ENCODE measurements at regions of chr16 and their contacts with region 1.

Region 1: DNA sequence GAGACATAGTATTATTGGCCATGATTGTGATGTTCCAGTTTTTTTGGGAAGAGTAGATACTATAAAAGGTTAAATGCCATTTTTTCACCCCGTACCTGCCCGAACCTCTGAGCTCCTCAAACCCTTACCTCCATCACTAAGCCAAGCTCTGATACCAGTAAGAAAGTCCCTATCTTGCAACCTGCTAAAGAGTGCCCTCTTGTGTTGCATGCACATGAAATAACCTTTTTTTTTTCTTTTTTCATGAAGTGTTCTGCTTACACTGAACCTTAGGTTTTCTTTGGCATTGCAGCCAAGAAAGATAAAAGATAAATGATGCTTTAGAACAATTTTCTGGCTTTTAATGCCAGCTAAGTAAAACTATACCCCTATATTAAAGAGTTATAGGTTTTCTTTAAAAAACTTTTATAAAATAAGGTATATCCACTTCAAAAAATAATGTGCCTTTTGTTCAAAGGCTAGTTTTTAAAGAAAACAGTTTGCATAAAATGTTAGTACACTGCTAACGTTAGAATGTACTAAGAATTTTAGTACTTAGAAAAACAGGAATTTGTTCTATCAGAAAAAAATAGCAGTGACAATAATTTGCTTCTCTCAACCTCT is 295.3 kb upstream of the PMFBP1 start:
- DNase-seq: peak; percentile 6
- H3K4me3 ChIP-seq: no peak overlapping the region
- H3K27ac ChIP-seq: no peak overlapping the region
- H3K27me3 ChIP-seq: no peaks in the 10 kb centered on the region
- CTCF ChIP-seq: peak; percentile 86

Region 2: DNA sequence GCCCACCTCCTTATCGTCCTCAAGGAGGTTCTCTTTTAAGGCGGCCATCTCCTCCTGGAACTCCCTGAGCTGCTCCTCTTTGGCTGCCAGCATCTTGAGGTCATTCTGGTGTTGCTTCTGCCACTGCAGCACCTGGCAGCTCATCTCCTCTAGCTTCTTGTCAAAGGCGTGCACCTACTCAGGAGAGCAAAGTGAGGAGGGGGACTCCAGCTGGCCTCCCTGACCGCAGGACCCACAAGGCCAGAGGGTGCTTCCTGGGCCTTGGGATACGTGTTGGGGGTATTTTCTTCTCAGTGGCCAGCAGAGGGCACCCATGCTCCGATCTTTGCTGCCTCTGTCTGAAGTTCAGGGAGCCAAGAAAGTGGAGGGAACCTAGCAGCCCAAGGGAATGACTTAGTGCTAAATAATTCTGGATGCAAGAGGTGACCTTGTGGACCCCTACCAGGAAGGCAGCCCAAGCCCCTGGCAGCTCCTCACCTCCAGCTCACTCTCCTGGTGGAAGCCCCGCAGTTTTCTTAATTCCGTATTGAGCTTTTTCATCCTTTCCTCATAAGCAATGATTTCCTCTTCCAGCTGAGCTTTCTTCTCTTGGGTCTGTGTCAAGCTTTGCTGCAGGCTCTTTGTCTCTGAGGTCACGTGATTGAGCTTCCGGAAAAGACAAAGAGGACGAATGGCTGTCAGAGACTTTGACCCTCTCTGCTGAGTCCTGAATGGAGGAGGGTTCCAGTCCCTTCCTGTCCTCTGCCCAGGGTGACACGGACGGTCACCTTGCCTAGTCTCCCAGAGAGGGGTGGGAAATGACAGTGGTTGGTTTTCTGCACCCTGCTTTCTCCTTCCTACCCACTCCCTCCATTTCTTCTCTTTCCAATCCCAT is 342.3 kb before region 1 on chr16:
- CTCF ChIA-PET with region 1: interaction called, 24 read pairs
- POLR2A ChIA-PET with region 1: no interaction called
- DNase-seq: peak; percentile 34
- H3K4me3 ChIP-seq: no peak overlapping the region
- H3K27ac ChIP-seq: no peak overlapping the region
- H3K27me3 ChIP-seq: peaks cover 8% of the 10 kb centered on the region
- CTCF ChIP-seq: peak; percentile 86

Region 3: DNA sequence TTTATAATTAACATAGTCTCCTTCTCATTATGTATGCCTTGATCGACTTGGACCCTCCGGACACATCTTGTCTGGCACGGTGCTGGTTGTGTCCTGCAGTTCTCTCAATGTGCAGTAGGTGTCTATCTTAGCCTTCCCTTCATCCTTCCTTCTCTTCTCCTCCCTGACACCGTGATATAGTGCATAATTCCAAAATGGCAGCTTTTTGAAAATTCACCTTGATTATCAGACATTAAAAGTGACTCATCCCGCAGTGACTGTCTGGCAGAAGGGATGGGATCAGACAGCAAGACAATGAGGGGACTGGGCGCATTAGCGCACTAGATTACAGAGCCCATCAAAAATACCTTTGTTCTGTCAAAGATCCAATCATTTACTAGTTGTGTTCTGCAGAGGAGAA is 225.3 kb before region 1 on chr16:
- CTCF ChIA-PET with region 1: interaction called, 157 read pairs
- POLR2A ChIA-PET with region 1: no interaction called
- DNase-seq: peak; percentile 23
- H3K4me3 ChIP-seq: no peak overlapping the region
- H3K27ac ChIP-seq: no peak overlapping the region
- H3K27me3 ChIP-seq: no peaks in the 10 kb centered on the region
- CTCF ChIP-seq: peak; percentile 95

Region 4: GRCh38 chr16:72442385-72443158 is 24.7 kb before region 1 on chr16:
- CTCF ChIA-PET with region 1: interaction called, 10 read pairs
- POLR2A ChIA-PET with region 1: no interaction called
- DNase-seq: no peak
- H3K4me3 ChIP-seq: no peak overlapping the region
- H3K27ac ChIP-seq: no peak overlapping the region
- H3K27me3 ChIP-seq: no peaks in the 10 kb centered on the region
- CTCF ChIP-seq: no peak

Region 5: DNA sequence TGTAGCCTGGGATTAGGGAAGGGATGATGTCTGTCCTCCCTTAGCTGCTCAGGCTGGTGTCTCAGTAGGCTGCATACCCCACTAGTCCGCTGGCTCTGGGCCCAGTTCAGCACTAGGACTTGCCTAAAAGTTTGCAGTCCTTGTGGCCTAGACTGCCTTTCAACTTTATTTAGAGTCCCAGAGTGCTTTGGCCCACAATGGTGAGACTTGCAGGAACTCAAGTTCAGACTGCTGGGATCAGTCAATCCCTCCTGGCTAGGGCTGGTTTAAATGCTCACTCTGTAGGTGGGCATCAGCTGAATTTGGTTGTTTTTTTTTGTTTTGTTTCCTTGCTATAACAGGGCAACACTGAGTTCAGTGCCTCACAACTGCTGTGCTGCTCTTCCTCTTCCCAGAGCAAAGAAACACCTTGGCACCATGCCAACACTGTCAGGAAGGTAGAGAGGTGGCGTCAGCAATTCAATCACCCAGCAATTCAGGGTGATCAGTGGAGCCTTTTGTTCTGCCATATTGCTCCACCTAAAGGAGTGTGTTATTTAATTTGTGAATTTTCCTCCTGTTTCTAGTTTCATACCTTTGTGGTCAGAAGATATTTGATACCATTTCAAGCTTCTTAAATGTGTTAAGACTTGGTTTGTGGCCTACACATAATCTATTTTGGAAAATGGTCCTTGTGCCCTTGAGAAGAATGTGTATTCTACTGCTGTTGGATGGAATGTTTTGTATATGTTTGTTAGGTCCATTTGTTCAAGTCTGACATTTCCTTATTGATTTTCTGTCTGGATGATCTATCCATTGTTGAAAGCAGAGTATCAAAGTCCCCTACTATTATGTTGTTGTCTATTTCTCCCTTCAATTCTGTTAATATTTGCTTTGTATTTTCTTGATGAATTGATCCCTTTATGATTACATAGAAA is 11.3 kb before region 1 on chr16:
- CTCF ChIA-PET with region 1: interaction called, 15 read pairs
- POLR2A ChIA-PET with region 1: no interaction called
- DNase-seq: no peak
- H3K4me3 ChIP-seq: no peak overlapping the region
- H3K27ac ChIP-seq: no peak overlapping the region
- H3K27me3 ChIP-seq: no peaks in the 10 kb centered on the region
- CTCF ChIP-seq: no peak

Measured in AG04450 (cell line).